ENCODE measurements at regions of chr11 and their contacts with region 1.

Region 1: GRCh38 chr11:64894070-64894796 is 15.8 kb upstream of the EHD1 start:
- DNase-seq: peak; percentile 90 to 94
- H3K4me3 ChIP-seq: peak overlapping the region; percentile 78
- H3K4me3 Mint-ChIP-seq: peak overlapping the region; percentile 80
- H3K27ac Mint-ChIP-seq: peak overlapping the region; percentile 93
- H3K4me1 ChIP-seq: peaks cover 47% of the 10 kb centered on the region
- H3K4me1 Mint-ChIP-seq: peaks cover 22% of the 10 kb centered on the region
- H3K27me3 ChIP-seq: no peaks in the 10 kb centered on the region
- H3K27me3 Mint-ChIP-seq: no peaks in the 10 kb centered on the region
- CTCF ChIP-seq: peak; percentile 94 to 97

Region 2: GRCh38 chr11:64619811-64620380 is 274.3 kb before region 1 on chr11:
- CTCF ChIA-PET with region 1: no interaction called
- POLR2A ChIA-PET with region 1: no interaction called
- intact Hi-C with region 1: no loop called
- DNase-seq: no peak
- H3K4me3 ChIP-seq: no peak overlapping the region
- H3K4me3 Mint-ChIP-seq: no peak overlapping the region
- H3K27ac Mint-ChIP-seq: no peak overlapping the region
- H3K4me1 ChIP-seq: no peaks in the 10 kb centered on the region
- H3K4me1 Mint-ChIP-seq: no peaks in the 10 kb centered on the region
- H3K27me3 ChIP-seq: no peaks in the 10 kb centered on the region
- H3K27me3 Mint-ChIP-seq: no peaks in the 10 kb centered on the region
- CTCF ChIP-seq: no peak

Region 3: GRCh38 chr11:64803163-64803845 is 90.9 kb before region 1 on chr11 and contains the start of gene MAP4K2:
- CTCF ChIA-PET with region 1: no interaction called
- POLR2A ChIA-PET with region 1: no interaction called
- intact Hi-C with region 1: loop called (anchors 5 kb)
- DNase-seq: peak; percentile 92 to 96
- H3K4me3 ChIP-seq: peak within 1 kb of the TSS; percentile 75
- H3K4me3 Mint-ChIP-seq: peak within 1 kb of the TSS; percentile 87
- H3K27ac Mint-ChIP-seq: peak within 1 kb of the TSS; percentile 76
- H3K4me1 ChIP-seq: peaks cover 20% of the 10 kb centered on the region
- H3K4me1 Mint-ChIP-seq: peaks cover 9% of the 10 kb centered on the region
- H3K27me3 ChIP-seq: no peaks in the 10 kb centered on the region
- H3K27me3 Mint-ChIP-seq: no peaks in the 10 kb centered on the region
- CTCF ChIP-seq: peak; percentile 17 to 42
- total RNA-seq, gene MAP4K2: 16.8 and 21.4 TPM in 2 replicates

Region 4: GRCh38 chr11:64924102-64924851 is 30.0 kb after region 1 on chr11 and contains the start of gene PPP2R5B:
- CTCF ChIA-PET with region 1: interaction called, 13 read pairs
- POLR2A ChIA-PET with region 1: no interaction called
- intact Hi-C with region 1: no loop called
- DNase-seq: peak; percentile 93 to 94
- H3K4me3 ChIP-seq: peak within 1 kb of the TSS; percentile 60
- H3K4me3 Mint-ChIP-seq: peak within 1 kb of the TSS; percentile 94
- H3K27ac Mint-ChIP-seq: peak within 1 kb of the TSS; percentile 99
- H3K4me1 ChIP-seq: peaks cover 4% of the 10 kb centered on the region; the same call in 1 of the 2 replicates
- H3K4me1 Mint-ChIP-seq: peaks cover 6% of the 10 kb centered on the region
- H3K27me3 ChIP-seq: no peaks in the 10 kb centered on the region
- H3K27me3 Mint-ChIP-seq: no peaks in the 10 kb centered on the region
- CTCF ChIP-seq: no peak
- total RNA-seq, gene PPP2R5B: 7.4 and 7.7 TPM in 2 replicates

Region 5: GRCh38 chr11:65083834-65084597 is 189.8 kb after region 1 on chr11 and contains the starts of genes CDCA5 and ZFPL1:
- CTCF ChIA-PET with region 1: no interaction called
- POLR2A ChIA-PET with region 1: no interaction called
- intact Hi-C with region 1: no loop called
- DNase-seq: peak; percentile 96 to 97
- H3K4me3 ChIP-seq: peak within 1 kb of the TSS; percentile 58
- H3K4me3 Mint-ChIP-seq: peak within 1 kb of the TSS; percentile 85
- H3K27ac Mint-ChIP-seq: peak within 1 kb of the TSS; percentile 98
- H3K4me1 ChIP-seq: peaks cover 16% of the 10 kb centered on the region; the same call in 1 of the 2 replicates
- H3K4me1 Mint-ChIP-seq: peaks cover 17% of the 10 kb centered on the region
- H3K27me3 ChIP-seq: no peaks in the 10 kb centered on the region
- H3K27me3 Mint-ChIP-seq: no peaks in the 10 kb centered on the region
- CTCF ChIP-seq: no peak
- total RNA-seq, gene CDCA5: 67.0 and 71.1 TPM in 2 replicates
- total RNA-seq, gene ZFPL1: 44.5 and 46.0 TPM in 2 replicates

Measured in Caco-2 (cell line).